ENCODE measurements at regions of chr19 and their contacts with region 1.

Region 1: GRCh38 chr19:5138606-5139582 is 170.0 kb downstream of the KDM4B start:
- DNase-seq: peak in 3 of 6 donors; percentile 15 to 43 (median 25)
- ATAC-seq: peak in 1 of 4 donors; percentile 8
- H3K4me3 ChIP-seq: no peak overlapping the region
- H3K27ac ChIP-seq: no peak overlapping the region
- H3K4me1 ChIP-seq: no peaks in the 10 kb centered on the region
- H3K27me3 ChIP-seq: no peaks in the 10 kb centered on the region
- CTCF ChIP-seq: no peak

Region 2: GRCh38 chr19:5048091-5048726 is 90.7 kb before region 1 on chr19:
- intact Hi-C with region 1: loop called in 2 of 3 experiments (anchors 5 to 10 kb)
- DNase-seq: peak; percentile 65 to 93 (median 86)
- ATAC-seq: peak; percentile 72 to 88 (median 84)
- H3K4me3 ChIP-seq: no peak overlapping the region
- H3K27ac ChIP-seq: no peak overlapping the region
- H3K4me1 ChIP-seq: peaks cover 22 to 28% (median 26%) of the 10 kb centered on the region in 3 donors
- H3K27me3 ChIP-seq: no peaks in the 10 kb centered on the region
- CTCF ChIP-seq: peak; percentile 98 to 99 (median 98)